ENCODE measurements at regions of chr1 and their contacts with region 1.

Region 1: DNA sequence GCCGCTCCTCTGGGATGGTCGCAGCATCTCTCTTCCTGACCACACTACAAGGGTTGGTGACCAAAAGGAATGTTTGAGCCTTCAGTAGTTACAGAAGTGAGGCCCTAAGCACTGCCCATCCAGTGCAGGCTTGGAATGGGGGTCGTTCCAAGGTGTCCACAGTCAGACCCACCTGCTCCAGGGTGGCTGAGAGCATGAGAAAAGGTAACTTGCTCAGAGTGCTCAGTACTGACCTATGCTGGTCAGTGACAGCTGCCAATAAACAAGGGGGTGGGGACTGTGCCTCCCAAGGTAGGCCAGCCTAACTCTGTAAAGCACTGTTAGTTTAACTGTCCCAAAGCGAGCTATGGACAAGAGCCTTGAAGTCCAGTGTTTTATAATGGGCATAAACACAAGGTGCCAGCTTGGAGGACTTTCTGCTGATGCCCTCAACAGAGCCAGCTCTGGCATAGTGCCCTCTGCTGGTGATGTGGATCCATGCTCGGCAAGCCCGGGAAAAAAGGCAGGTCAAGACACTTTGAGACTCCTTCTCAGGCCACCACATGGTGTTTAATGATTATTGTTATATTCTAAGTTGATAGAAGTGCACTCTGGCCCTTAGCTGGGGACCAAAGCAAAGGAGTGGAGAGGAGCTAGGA is 78.1 kb upstream of the DNAH14 start:
- DNase-seq: peak; percentile 76
- H3K4me3 Mint-ChIP-seq: no peak overlapping the region
- H3K27ac Mint-ChIP-seq: no peak overlapping the region
- H3K4me1 Mint-ChIP-seq: no peaks in the 10 kb centered on the region
- H3K27me3 Mint-ChIP-seq: peaks cover 42% of the 10 kb centered on the region
- CTCF ChIP-seq: peak; percentile 63

Region 2: GRCh38 chr1:224644553-224645154 is 206.7 kb before region 1 on chr1:
- CTCF ChIA-PET with region 1: interaction called, 5 read pairs
- intact Hi-C with region 1: loop called (anchors 1 kb)
- DNase-seq: peak; percentile 66
- H3K4me3 Mint-ChIP-seq: no peak overlapping the region
- H3K27ac Mint-ChIP-seq: no peak overlapping the region
- H3K4me1 Mint-ChIP-seq: peaks cover 8% of the 10 kb centered on the region
- H3K27me3 Mint-ChIP-seq: peaks cover 18% of the 10 kb centered on the region
- CTCF ChIP-seq: peak; percentile 95

Region 3: DNA sequence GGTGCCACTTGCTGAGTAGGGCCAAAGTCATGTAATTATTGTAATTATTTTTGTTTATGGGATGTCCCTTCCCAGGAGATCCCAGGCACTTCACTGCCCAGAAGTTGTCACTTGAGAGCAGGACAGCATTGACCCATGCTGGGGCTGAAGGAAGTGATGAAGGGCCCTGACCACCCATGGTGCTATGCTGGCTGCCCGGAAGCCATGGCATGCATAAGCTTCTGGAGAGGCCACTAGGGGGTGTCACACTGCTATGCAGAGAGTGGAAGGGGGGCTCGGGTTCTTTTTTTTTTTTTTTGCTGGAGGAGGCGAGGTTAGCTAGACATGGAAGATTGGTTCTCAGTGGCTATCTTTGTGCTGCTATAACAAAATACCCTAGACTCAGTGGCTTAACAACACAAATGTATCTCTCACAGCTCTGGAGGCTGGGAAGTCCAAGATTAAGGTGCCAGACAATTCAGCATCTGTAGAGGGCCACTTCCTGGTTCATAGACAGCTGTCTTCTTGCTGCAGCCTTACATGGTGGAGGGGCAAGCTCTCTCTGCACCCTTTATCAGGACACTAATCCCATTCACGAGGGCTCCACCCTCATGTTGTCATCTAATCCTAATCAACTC is 150.3 kb before region 1 on chr1:
- CTCF ChIA-PET with region 1: interaction called, 8 read pairs
- intact Hi-C with region 1: loop called (anchors 10 kb)
- DNase-seq: peak; percentile 11
- H3K4me3 Mint-ChIP-seq: no peak overlapping the region
- H3K27ac Mint-ChIP-seq: no peak overlapping the region
- H3K4me1 Mint-ChIP-seq: no peaks in the 10 kb centered on the region
- H3K27me3 Mint-ChIP-seq: peaks cover 90% of the 10 kb centered on the region
- CTCF ChIP-seq: no peak

Region 4: GRCh38 chr1:224791362-224791941 is 59.9 kb before region 1 on chr1:
- CTCF ChIA-PET with region 1: interaction called, 3 read pairs
- intact Hi-C with region 1: loop called (anchors 10 kb)
- DNase-seq: no peak
- H3K4me3 Mint-ChIP-seq: no peak overlapping the region
- H3K27ac Mint-ChIP-seq: no peak overlapping the region
- H3K4me1 Mint-ChIP-seq: no peaks in the 10 kb centered on the region
- H3K27me3 Mint-ChIP-seq: peaks cover 45% of the 10 kb centered on the region
- CTCF ChIP-seq: no peak